MCF 10A (cell line): ENCODE measurements at regions of chr17 and their contacts with region 1.

Region 1: DNA sequence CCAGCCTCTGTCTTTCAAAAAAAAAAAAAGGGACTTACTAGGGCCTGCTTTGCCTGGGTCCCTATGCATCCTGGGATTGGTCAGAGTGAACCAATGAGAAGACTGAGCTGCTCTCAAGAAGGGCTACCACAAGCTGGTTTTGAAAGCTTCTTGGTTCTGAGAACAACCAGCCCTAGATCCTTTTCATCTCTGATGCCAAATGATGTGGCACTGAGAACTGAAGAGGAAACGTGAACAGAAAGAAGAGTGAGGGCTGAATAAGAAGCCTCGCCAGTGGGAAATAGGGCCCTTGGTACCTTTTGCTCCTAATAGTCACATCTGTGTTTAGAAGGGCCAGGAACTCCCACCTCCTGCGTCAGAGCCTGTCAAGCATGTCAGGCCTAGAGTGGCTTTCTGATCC is 10.7 kb downstream of the TACO1 start:
- DNase-seq: no peak
- H3K4me3 Mint-ChIP-seq: no peak overlapping the region
- H3K27ac Mint-ChIP-seq: no peak overlapping the region
- H3K4me1 Mint-ChIP-seq: no peaks in the 10 kb centered on the region
- H3K27me3 Mint-ChIP-seq: no peaks in the 10 kb centered on the region
- CTCF ChIP-seq: no peak

Region 2: GRCh38 chr17:63425482-63425881 is 185.9 kb before region 1 on chr17:
- CTCF ChIA-PET with region 1: interaction called, 68 read pairs
- POLR2A ChIA-PET with region 1: interaction called, 6 read pairs
- intact Hi-C with region 1: loop called (anchors 1 kb)
- DNase-seq: peak; percentile 79
- H3K4me3 Mint-ChIP-seq: no peak overlapping the region
- H3K27ac Mint-ChIP-seq: no peak overlapping the region
- H3K4me1 Mint-ChIP-seq: peaks cover 11% of the 10 kb centered on the region
- H3K27me3 Mint-ChIP-seq: no peaks in the 10 kb centered on the region
- CTCF ChIP-seq: peak; percentile 94

Region 3: DNA sequence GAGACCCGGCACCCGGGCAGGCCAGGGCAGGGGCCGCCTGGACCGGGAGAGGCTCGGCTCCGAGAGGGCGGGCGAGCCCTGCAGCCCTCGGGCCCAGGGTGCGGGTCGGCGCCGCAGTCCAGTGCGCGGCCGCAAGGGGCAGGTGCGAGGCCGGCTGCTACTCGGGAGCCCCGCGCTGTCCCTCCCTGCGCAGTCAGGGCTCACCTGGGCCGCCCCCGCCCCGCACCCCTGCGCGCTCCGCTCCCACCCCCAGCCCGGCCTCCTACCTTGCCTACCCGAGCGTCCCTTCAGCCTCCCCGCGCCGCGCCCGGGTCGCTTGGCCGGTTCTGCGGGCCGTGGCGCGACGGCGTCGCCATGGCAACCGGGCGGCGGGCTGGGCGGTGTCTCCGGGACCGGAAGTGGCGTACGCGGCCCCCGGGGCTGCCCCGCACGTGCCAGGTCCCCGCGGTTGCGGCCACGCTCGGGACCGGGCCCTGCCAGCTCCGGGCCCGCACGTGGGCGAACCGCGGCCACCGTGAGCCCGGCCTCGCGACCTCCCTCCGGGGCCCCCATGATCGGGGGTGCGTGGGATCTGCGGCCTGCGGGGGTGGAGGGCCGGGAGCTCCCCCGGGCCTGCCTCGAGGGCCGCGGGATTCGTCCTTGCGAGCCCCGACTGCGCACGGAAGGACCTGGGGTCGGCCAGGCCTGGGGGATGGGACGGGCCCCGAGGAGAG is 165.2 kb before region 1 on chr17 and contains the start of gene CYB561:
- CTCF ChIA-PET with region 1: interaction called, 14 read pairs
- POLR2A ChIA-PET with region 1: interaction called, 9 read pairs
- intact Hi-C with region 1: loop called (anchors 1 kb)
- DNase-seq: peak; percentile 70
- H3K4me3 Mint-ChIP-seq: peak within 1 kb of the TSS; percentile 68
- H3K27ac Mint-ChIP-seq: peak within 1 kb of the TSS; percentile 90
- H3K4me1 Mint-ChIP-seq: peaks cover 16% of the 10 kb centered on the region
- H3K27me3 Mint-ChIP-seq: no peaks in the 10 kb centered on the region
- CTCF ChIP-seq: peak; percentile 64
- total RNA-seq, gene CYB561: 57.2 and 62.0 TPM in 2 replicates

Region 4: GRCh38 chr17:63579540-63580001 is 31.8 kb before region 1 on chr17:
- CTCF ChIA-PET with region 1: interaction called, 10 read pairs
- POLR2A ChIA-PET with region 1: interaction called, 3 read pairs
- intact Hi-C with region 1: no loop called
- DNase-seq: no peak
- H3K4me3 Mint-ChIP-seq: no peak overlapping the region
- H3K27ac Mint-ChIP-seq: no peak overlapping the region
- H3K4me1 Mint-ChIP-seq: no peaks in the 10 kb centered on the region
- H3K27me3 Mint-ChIP-seq: no peaks in the 10 kb centered on the region
- CTCF ChIP-seq: no peak

Region 5: GRCh38 chr17:63621766-63622519 is 10.6 kb after region 1 on chr17 and contains the start of gene MAP3K3:
- CTCF ChIA-PET with region 1: interaction called, 4 read pairs
- POLR2A ChIA-PET with region 1: interaction called, 16 read pairs
- intact Hi-C with region 1: no loop called
- DNase-seq: peak; percentile 100
- H3K4me3 Mint-ChIP-seq: peak within 1 kb of the TSS; percentile 93
- H3K27ac Mint-ChIP-seq: no peak within 1 kb of the TSS
- H3K4me1 Mint-ChIP-seq: peaks cover 20% of the 10 kb centered on the region
- H3K27me3 Mint-ChIP-seq: no peaks in the 10 kb centered on the region
- CTCF ChIP-seq: no peak
- total RNA-seq, gene MAP3K3: 12.8 and 13.8 TPM in 2 replicates